Heart left ventricle (tissue), 16 donors: ENCODE measurements at regions of chr6 and their contacts with region 1.

Region 1: GRCh38 chr6:154615483-154616025 is 105.1 kb upstream of the CNKSR3 start:
- DNase-seq: peak; percentile 65 to 82 (median 79)
- ATAC-seq: peak; percentile 76 to 90 (median 86)
- H3K4me3 ChIP-seq: no peak overlapping the region
- H3K27ac ChIP-seq: no peak overlapping the region
- H3K4me1 ChIP-seq: peaks cover 0 to 17% (median 3%) of the 10 kb centered on the region in 12 donors
- H3K27me3 ChIP-seq: no peaks in the 10 kb centered on the region
- CTCF ChIP-seq: peak in 6 of 12 donors; percentile 9 to 46 (median 22)
- POLR2A ChIP-seq: no peak

Region 2: GRCh38 chr6:154432533-154433476 is 182.7 kb before region 1 on chr6:
- intact Hi-C with region 1: loop called in 1 of 10 experiments (anchors 10 kb)
- DNase-seq: peak in 1 of 5 donors; percentile 24
- ATAC-seq: peak in 3 of 4 donors; percentile 68 to 80 (median 72)
- H3K4me3 ChIP-seq: no peak overlapping the region
- H3K27ac ChIP-seq: peak overlapping the region in 7 of 12 donors; percentile 10 to 61 (median 35)
- H3K4me1 ChIP-seq: peaks cover 0 to 43% (median 21%) of the 10 kb centered on the region in 12 donors
- H3K27me3 ChIP-seq: no peaks in the 10 kb centered on the region
- CTCF ChIP-seq: no peak
- POLR2A ChIP-seq: no peak

Region 3: GRCh38 chr6:154696661-154697060 is 81.1 kb after region 1 on chr6:
- intact Hi-C with region 1: no loop called
- DNase-seq: no peak
- ATAC-seq: no peak
- H3K4me3 ChIP-seq: no peak overlapping the region
- H3K27ac ChIP-seq: no peak overlapping the region
- H3K4me1 ChIP-seq: no peaks in the 10 kb centered on the region
- H3K27me3 ChIP-seq: no peaks in the 10 kb centered on the region
- CTCF ChIP-seq: no peak
- POLR2A ChIP-seq: no peak

Region 4: DNA sequence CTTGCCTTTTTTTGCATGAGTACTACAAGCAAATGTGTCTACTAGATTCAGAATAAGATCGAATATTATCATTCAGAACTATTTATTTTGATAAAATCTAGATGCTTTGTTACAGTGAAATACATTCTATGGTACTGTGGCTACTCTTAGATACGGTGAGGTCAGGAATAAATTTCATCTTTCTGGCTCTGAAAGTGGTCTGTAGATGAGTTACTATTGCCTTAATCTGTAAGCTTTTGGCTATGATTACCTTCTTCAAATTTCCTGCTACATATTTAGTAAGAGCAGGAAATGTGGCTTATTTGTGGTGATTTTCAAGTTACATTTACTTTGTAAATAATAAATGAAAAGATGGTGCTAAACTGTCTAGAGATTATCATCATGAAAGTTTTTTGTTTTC is 167.7 kb after region 1 on chr6:
- intact Hi-C with region 1: no loop called
- DNase-seq: no peak
- ATAC-seq: no peak
- H3K4me3 ChIP-seq: no peak overlapping the region
- H3K27ac ChIP-seq: no peak overlapping the region
- H3K4me1 ChIP-seq: peaks cover 0 to 8% (median 0%) of the 10 kb centered on the region in 12 donors
- H3K27me3 ChIP-seq: no peaks in the 10 kb centered on the region
- CTCF ChIP-seq: no peak
- POLR2A ChIP-seq: no peak

Region 5: DNA sequence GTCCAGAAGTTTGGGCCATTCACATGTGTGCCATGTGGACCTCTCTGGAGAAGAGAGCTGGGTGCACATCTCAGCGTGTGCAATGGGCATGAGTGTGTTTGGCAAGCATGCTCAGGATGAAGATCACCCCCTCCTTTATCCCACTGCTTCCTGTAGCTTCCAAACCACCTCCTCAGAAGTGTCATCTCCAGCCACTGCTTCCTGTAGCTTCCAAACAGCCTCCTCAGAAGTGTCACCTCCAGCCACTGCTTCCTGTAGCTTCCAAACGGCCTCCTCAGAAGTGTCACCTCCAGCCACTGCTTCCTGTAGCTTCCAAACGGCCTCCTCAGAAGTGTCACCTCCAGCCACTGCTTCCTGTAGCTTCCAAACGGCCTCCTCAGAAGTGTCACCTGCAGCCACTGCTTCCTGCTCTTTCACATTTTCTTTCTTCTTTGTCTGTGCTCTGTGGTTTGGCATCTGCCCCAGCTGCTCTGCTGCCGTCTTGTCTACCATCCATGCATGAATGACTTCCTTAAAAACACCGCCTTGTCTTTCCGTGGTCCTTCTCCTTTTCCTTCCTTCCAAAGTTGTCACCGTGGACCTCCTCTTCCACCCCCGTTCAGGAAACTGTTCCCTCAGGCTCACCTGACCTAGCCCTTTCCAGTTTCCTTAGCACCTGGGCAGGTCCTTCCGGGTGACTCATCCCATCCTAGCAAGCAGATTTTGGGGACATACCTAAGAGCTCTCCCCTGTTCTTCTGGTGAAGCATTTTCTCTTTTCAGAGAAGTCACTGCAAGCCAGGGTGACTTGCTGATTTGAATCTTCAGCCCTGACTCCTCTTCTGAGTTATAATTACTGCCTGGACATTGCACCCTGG is 336.0 kb after region 1 on chr6:
- intact Hi-C with region 1: no loop called
- DNase-seq: no peak
- ATAC-seq: no peak
- H3K4me3 ChIP-seq: no peak overlapping the region
- H3K27ac ChIP-seq: no peak overlapping the region
- H3K4me1 ChIP-seq: no peaks in the 10 kb centered on the region
- H3K27me3 ChIP-seq: no peaks in the 10 kb centered on the region
- CTCF ChIP-seq: no peak
- POLR2A ChIP-seq: no peak